Breast epithelium (tissue), 4 donors: ENCODE measurements at regions of chr11 and their contacts with region 1.

Region 1: GRCh38 chr11:102346748-102347461 is at the start of gene BIRC2:
- DNase-seq: peak; percentile 91
- H3K4me3 ChIP-seq: peak within 1 kb of the TSS; percentile 70 to 87 (median 78)
- H3K27ac ChIP-seq: peak within 1 kb of the TSS; percentile 99 to 100
- H3K4me1 ChIP-seq: peaks cover 0 to 4% of the 10 kb centered on the region in 2 donors
- H3K27me3 ChIP-seq: no peaks in the 10 kb centered on the region
- CTCF ChIP-seq: peak; percentile 74 to 92 (median 86)
- POLR2A ChIP-seq: peak; percentile 92
- total RNA-seq, gene BIRC2: 45.6 to 95.7 (median 48.5) TPM

Region 2: GRCh38 chr11:102144357-102145342 is 202.3 kb before region 1 on chr11:
- intact Hi-C with region 1: loop called (anchors 5 kb)
- DNase-seq: no peak
- H3K4me3 ChIP-seq: no peak overlapping the region
- H3K27ac ChIP-seq: no peak overlapping the region
- H3K4me1 ChIP-seq: peaks cover 0 to 5% of the 10 kb centered on the region in 2 donors
- H3K27me3 ChIP-seq: no peaks in the 10 kb centered on the region
- CTCF ChIP-seq: no peak
- POLR2A ChIP-seq: no peak

Region 3: DNA sequence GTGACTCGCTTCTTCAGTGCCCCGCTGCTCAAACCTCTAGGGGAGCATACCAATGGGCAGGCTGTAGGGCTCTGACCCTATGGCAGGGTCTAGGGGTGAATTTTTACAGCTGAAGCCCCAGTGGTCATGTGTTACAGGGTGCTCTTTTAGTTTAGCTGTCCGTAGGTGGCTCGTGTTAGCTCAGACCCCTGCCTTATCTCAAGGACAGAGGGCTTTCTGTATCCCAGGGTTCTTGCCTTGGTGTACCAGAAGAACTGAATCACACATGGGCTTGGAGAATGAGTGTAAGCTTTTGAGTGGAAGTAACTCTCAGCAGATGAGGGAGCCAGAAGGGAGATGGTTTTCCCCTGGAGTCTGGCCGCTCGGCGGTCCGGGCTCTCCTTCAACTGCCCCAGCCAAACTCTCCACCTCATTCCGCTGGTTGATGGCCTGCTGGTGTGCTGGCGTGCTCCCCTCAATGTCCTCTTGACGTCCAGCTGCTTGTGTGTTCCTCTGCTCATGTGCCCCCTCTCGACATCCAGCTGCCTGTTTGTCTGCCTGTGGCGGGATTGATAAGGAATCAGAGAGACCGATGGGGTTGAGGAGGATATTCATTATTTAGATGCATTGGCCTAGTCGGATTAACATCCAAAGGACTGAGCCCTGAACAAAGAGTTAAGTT is 37.6 kb after region 1 on chr11:
- intact Hi-C with region 1: no loop called
- DNase-seq: no peak
- H3K4me3 ChIP-seq: no peak overlapping the region
- H3K27ac ChIP-seq: no peak overlapping the region
- H3K4me1 ChIP-seq: no peaks in the 10 kb centered on the region
- H3K27me3 ChIP-seq: no peaks in the 10 kb centered on the region
- CTCF ChIP-seq: no peak
- POLR2A ChIP-seq: no peak

Region 4: GRCh38 chr11:102399189-102399588 is 52.3 kb after region 1 on chr11:
- intact Hi-C with region 1: no loop called
- DNase-seq: no peak
- H3K4me3 ChIP-seq: no peak overlapping the region
- H3K27ac ChIP-seq: no peak overlapping the region
- H3K4me1 ChIP-seq: no peaks in the 10 kb centered on the region
- H3K27me3 ChIP-seq: no peaks in the 10 kb centered on the region
- CTCF ChIP-seq: no peak
- POLR2A ChIP-seq: no peak